ENCODE measurements at regions of chr19 and their contacts with region 1.

Region 1: DNA sequence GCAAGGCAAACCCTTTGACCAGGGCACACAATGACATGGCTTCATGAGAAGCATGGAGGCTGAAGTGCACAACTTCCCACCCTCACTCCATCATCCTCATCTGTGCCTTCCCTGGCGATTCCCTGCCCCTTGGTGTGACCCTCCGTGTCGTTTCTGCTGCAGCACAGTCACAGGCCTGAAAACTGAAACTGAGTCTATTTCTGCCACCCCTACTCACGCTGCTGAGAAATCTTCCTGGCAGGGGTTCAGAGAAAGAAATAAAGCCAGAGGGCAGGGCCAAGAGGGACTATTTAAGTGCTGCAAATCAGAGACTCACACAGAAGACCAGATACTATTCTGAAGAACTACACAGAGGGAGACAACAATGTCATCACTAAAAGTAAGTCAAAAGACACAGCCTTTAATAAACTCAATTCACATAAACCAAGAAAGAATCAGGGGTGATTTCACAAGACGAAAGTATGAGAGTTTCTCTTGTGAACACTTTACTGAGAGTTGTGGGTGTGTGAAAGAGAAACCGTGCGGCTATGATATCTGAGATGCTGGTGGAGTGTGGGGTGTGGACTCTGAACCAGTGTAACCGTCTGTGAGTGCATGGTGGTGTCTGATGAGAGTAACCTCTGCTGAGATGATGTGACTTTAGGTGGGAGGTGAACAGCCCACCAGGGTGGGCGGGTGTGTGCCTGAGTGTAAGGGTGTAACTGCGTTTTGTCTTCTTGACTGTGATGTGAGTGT is 23.5 kb downstream of the LGALS16 start:
- DNase-seq: no peak
- ATAC-seq: peak; percentile 48; the same call in 2 of the 3 replicates
- H3K4me3 ChIP-seq: no peak overlapping the region
- H3K27ac ChIP-seq: no peak overlapping the region
- H3K4me1 ChIP-seq: peaks cover 26% of the 10 kb centered on the region
- H3K27me3 ChIP-seq: peaks cover 1 to 4% of the 10 kb centered on the region in 2 experiments; a peak in 2 of 5 replicates
- CTCF ChIP-seq: no peak
- EP300 ChIP-seq: no peak
- POLR2A ChIP-seq: no peak
- RAD21 ChIP-seq: no peak

Region 2: DNA sequence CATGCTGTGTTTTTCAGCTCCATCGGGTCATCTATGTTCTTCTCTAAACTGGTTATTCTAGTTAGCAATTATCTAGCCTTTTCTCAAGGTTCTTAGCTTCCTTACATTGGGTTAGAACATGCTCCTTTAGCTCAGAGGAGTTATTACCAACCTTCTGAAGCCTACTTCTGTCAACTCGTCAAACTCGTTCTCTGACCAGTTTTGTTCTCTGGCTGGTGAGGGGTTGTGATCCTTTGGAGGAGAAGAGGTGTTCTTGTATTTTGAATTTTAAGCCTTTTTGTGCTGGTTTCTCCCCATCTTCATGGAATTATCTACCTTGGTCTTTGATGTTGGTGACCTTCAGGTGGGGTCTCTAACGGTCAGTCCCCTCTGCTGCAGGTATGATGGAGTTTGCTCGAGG is 56.0 kb before region 1 on chr19:
- CTCF ChIA-PET with region 1: no interaction called
- POLR2A ChIA-PET with region 1: no interaction called
- in situ Hi-C with region 1: no loop called
- intact Hi-C with region 1: no loop called
- DNase-seq: no peak
- ATAC-seq: no peak
- H3K4me3 ChIP-seq: no peak overlapping the region
- H3K27ac ChIP-seq: no peak overlapping the region
- H3K4me1 ChIP-seq: no peaks in the 10 kb centered on the region; the same call in 1 of the 2 replicates
- H3K27me3 ChIP-seq: no peaks in the 10 kb centered on the region
- CTCF ChIP-seq: no peak
- EP300 ChIP-seq: no peak
- POLR2A ChIP-seq: no peak
- RAD21 ChIP-seq: no peak

Region 3: DNA sequence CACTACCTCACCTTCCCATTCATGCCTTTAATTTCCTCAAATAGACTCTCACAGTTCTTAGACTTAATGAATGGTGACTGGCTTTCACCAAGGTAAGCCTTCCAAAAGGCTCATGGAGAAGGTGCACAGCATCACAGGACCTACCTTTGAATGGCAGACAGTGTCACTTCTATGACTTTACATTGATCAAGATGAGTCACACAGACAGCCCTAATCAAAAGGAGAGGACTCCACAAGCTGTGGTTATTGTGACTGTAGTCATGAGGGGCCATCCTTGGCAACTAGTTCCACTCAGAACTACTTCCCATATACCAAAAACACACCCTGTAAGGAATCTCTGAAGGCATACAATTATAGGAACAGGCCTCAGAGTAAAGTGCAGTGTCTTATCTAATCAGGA is 17.7 kb before region 1 on chr19:
- CTCF ChIA-PET with region 1: no interaction called
- POLR2A ChIA-PET with region 1: no interaction called
- in situ Hi-C with region 1: no loop called
- intact Hi-C with region 1: no loop called
- DNase-seq: no peak
- ATAC-seq: no peak
- H3K4me3 ChIP-seq: no peak overlapping the region
- H3K27ac ChIP-seq: no peak overlapping the region
- H3K4me1 ChIP-seq: no peaks in the 10 kb centered on the region
- H3K27me3 ChIP-seq: no peaks in the 10 kb centered on the region; a peak in 2 of 5 replicates
- CTCF ChIP-seq: no peak
- EP300 ChIP-seq: no peak
- POLR2A ChIP-seq: no peak
- RAD21 ChIP-seq: no peak

Region 4: GRCh38 chr19:39765091-39766076 is 86.2 kb after region 1 on chr19:
- CTCF ChIA-PET with region 1: no interaction called
- POLR2A ChIA-PET with region 1: no interaction called
- in situ Hi-C with region 1: no loop called
- intact Hi-C with region 1: loop called (anchors 5 kb)
- DNase-seq: peak; percentile 48
- ATAC-seq: no peak; the same call in 2 of the 3 replicates
- H3K4me3 ChIP-seq: no peak overlapping the region
- H3K27ac ChIP-seq: no peak overlapping the region
- H3K4me1 ChIP-seq: no peaks in the 10 kb centered on the region
- H3K27me3 ChIP-seq: peaks cover under 1 to 1% of the 10 kb centered on the region in 2 experiments; a peak in 4 of 5 replicates
- CTCF ChIP-seq: peak; percentile 56
- EP300 ChIP-seq: no peak
- POLR2A ChIP-seq: no peak
- RAD21 ChIP-seq: no peak